ENCODE measurements at regions of chr20 and their contacts with region 1.

Region 1: DNA sequence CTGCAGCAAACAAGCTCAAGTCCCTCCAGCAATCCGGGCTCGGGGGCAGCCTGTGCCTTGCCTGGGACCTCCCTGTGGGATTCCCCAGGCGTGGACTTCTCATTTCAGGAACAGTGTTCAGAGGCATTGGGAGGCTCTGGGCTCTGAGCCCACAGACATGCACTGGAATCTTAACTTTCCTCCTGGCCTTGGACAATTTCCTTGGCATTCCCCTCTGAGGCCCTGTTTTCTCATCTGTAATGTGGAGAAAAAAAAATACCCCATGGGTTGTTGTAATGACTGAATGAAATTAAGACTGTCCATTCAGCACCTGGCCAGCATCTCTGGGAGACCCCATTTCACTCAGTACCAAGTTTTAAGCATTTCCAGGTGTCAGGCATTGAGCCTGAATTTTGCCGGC is 17.6 kb downstream of the BPIFB4 start:
- DNase-seq: peak; percentile 58 to 92 (median 79)
- ATAC-seq: peak in 1 of 2 donors; percentile 73
- H3K4me3 ChIP-seq: no peak overlapping the region
- H3K27ac ChIP-seq: no peak overlapping the region
- H3K4me1 ChIP-seq: no peaks in the 10 kb centered on the region
- H3K27me3 ChIP-seq: no peaks in the 10 kb centered on the region

Region 2: GRCh38 chr20:32858701-32859372 is 238.2 kb before region 1 on chr20 and contains the start of gene EFCAB8:
- intact Hi-C with region 1: no loop called
- DNase-seq: no peak
- ATAC-seq: peak in 1 of 2 donors; percentile 16
- H3K4me3 ChIP-seq: no peak within 1 kb of the TSS
- H3K27ac ChIP-seq: no peak within 1 kb of the TSS
- H3K4me1 ChIP-seq: peaks cover 4% of the 10 kb centered on the region
- H3K27me3 ChIP-seq: no peaks in the 10 kb centered on the region
- total RNA-seq, gene EFCAB8: 0.20 to 0.64 TPM in 2 of 4 donors, not detected in the others

Region 3: DNA sequence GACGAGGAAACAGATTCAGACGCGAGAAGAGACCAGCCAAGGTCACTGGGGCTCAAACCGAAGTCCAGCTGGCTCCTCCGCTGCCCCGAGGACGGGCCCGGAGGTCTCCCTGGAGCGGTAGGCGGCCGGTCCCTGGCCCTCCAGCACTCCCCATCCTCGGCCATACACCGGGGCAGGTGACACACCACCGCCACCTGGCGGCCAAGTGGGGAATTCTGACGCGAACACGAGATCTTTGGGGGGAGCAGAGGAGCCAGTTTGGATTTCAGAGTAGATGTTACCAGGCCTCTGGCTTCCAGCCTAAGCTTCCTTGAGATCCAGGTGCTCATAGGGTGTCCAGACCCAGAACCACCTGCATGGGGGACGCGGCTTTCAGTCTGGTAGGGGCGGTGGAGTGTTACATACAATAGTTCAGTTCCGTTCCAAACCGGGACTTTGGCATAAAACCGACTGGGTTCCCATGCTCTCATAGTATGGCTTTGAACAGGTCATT is 202.2 kb after region 1 on chr20:
- intact Hi-C with region 1: loop called in 1 of 4 experiments (anchors 10 kb)
- DNase-seq: peak; percentile 66 to 86 (median 86)
- ATAC-seq: peak; percentile 68 to 82
- H3K4me3 ChIP-seq: no peak overlapping the region
- H3K27ac ChIP-seq: no peak overlapping the region
- H3K4me1 ChIP-seq: no peaks in the 10 kb centered on the region
- H3K27me3 ChIP-seq: no peaks in the 10 kb centered on the region